ENCODE measurements at regions of chr7 and their contacts with region 1.

Region 1: DNA sequence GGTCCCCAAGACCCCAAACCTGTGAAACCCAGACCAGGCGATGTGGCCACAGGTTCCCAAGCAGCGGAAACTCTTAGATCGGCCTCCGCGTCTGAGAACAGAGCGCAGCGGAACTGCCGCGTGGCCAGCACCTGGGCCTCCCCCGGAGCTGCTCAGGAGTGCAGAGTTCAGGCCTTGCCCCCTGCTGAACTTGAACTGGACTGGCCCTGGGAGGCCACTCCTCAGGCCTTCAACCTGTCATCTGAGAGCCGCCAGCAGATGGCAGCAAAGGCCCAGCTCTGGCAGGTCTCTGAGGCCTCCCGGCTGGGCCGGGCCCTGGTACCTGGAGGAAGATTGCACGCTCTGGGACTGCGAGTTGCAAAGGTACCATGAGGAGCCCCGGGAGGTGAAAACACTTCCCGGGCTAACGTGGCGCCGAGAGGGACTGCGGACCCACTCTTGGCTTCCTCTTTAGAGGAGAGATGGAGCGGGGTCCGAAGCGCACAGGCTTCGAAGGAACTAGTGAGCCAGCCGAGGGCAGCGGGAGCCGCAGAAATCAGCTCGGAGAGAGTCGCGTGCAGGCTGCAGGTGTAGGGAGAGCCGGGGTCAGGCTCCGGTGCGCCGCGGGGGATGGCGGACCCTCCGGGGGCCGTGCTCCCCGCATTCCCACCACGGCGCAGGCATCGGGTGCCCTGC is 89.1 kb downstream of the PAXIP1 start:
- DNase-seq: peak; percentile 81 to 100 (median 94)
- ATAC-seq: peak; percentile 97 to 100 (median 98)
- H3K4me3 ChIP-seq: peak overlapping the region in 1 of 4 donors; percentile 32
- H3K27ac ChIP-seq: no peak overlapping the region
- H3K4me1 ChIP-seq: peaks cover 0 to 1% (median 0%) of the 10 kb centered on the region in 3 donors
- H3K27me3 ChIP-seq: no peaks in the 10 kb centered on the region
- CTCF ChIP-seq: peak; percentile 87 to 94 (median 92)

Region 2: GRCh38 chr7:155020996-155021395 is 107.2 kb after region 1 on chr7:
- intact Hi-C with region 1: no loop called
- DNase-seq: no peak
- ATAC-seq: no peak
- H3K4me3 ChIP-seq: no peak overlapping the region
- H3K27ac ChIP-seq: no peak overlapping the region
- H3K4me1 ChIP-seq: no peaks in the 10 kb centered on the region
- H3K27me3 ChIP-seq: no peaks in the 10 kb centered on the region
- CTCF ChIP-seq: no peak

Region 3: DNA sequence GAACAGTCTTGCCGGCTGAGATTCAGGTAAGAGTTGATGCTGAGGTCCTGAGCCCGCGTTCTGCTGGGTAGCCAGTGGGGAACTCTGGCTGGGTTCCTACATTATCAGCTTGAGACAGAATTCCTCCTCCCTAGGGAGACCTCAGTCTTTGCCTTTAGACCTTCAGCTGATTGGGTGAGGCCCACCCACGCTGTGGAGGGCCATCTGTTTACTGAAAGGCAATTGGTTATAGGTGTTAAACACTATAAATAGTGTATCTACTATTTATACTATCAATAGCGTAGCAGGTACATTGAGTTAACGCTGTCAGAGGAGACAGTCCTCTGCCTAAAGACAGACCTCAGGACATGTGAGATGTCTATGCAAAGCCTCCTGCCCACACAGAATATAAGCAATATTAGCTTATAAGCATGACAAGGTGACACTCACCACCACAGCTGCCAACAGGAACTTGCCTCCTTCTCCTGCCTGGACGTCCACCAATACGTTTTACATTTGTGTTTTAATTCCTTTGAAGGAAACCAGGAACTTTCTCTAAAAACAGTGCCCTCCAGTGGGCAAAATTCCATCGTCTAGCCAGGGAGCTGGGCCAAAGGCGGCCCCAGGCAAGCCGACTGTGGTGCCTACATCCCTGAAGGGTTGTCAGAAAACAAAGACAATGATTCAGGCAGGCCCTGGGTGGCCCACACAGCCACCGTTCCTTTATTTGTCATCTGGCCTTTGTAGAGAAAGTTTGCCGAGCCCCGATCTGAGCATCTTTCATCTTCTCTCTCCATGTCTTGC is 442.7 kb after region 1 on chr7:
- intact Hi-C with region 1: loop called in 1 of 3 experiments (anchors 10 kb)
- DNase-seq: peak in 3 of 6 donors; percentile 21 to 63 (median 48)
- ATAC-seq: peak; percentile 24 to 73 (median 62)
- H3K4me3 ChIP-seq: no peak overlapping the region
- H3K27ac ChIP-seq: no peak overlapping the region
- H3K4me1 ChIP-seq: no peaks in the 10 kb centered on the region
- H3K27me3 ChIP-seq: peaks cover 0 to 4% (median 0%) of the 10 kb centered on the region in 4 donors
- CTCF ChIP-seq: peak; percentile 15 to 30 (median 28)